Activated CD4-positive, alpha-beta T cell treated with anti-CD3 and anti-CD28 coated beads for 36 hours (primary cell): ENCODE measurements at regions of chr6 and their contacts with region 1.

Region 1: DNA sequence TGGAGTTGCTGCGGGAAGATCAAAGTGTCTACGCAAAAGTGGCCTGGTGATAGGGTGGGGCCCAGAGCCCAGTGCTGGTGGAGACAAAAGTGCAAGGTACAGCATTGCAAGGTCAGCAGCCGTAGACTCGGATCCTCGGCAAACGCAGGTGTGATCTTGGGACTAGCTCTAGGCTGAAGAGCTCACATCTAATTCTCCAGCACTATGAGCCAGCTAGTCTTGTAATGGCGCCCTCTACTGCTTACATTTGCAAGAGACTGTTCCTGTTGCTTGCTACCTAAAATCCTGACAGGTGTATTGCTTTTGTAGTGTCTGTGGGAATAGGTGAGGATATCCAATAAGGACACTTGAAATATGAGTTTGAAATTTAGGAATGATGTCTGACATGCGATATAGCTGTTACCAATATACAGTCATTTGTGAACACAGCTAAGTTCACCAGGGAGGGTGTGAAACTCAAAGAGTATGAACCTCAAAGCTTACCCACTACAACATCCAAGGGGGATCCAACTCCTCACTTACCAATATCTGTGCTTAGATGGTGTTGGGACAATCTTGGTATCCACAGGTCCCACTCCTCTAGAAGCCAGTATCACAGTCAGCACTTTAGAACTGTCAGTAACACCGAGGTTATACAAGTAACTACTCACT is 58.4 kb downstream of the PDE7B start:
- DNase-seq: peak; percentile 71
- ATAC-seq: peak; percentile 81
- H3K4me3 Mint-ChIP-seq: no peak overlapping the region
- H3K27ac Mint-ChIP-seq: no peak overlapping the region
- H3K4me1 Mint-ChIP-seq: peaks cover 11% of the 10 kb centered on the region
- H3K27me3 Mint-ChIP-seq: no peaks in the 10 kb centered on the region

Region 2: DNA sequence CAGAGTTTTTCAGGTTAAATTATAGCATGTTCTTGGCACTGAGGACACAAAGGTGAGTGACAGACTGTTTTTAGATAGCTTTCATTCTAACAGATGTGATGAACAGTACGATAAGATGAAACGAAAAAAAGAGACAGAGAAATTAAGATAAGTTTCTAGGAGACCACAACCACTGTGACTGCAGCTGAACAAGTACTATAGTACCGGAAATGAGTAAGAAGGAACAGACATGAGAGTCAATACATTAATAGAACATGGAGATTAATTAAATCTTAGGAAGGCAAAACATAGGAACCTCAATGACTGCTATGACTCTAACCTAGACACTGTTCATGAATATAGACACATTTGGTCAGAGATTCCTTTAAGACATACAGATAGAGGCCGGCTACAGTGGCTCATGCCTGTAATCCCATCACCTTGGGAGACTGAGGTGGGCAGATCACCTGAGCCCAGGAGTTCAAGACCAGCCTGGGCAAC is 895.5 kb before region 1 on chr6:
- CTCF ChIA-PET with region 1: no interaction called
- POLR2A ChIA-PET with region 1: no interaction called
- intact Hi-C with region 1: no loop called
- DNase-seq: peak; percentile 23
- ATAC-seq: peak; percentile 87
- H3K4me3 Mint-ChIP-seq: peak overlapping the region; percentile 18
- H3K27ac Mint-ChIP-seq: peak overlapping the region; percentile 45
- H3K4me1 Mint-ChIP-seq: peaks cover 59% of the 10 kb centered on the region
- H3K27me3 Mint-ChIP-seq: no peaks in the 10 kb centered on the region

Region 3: DNA sequence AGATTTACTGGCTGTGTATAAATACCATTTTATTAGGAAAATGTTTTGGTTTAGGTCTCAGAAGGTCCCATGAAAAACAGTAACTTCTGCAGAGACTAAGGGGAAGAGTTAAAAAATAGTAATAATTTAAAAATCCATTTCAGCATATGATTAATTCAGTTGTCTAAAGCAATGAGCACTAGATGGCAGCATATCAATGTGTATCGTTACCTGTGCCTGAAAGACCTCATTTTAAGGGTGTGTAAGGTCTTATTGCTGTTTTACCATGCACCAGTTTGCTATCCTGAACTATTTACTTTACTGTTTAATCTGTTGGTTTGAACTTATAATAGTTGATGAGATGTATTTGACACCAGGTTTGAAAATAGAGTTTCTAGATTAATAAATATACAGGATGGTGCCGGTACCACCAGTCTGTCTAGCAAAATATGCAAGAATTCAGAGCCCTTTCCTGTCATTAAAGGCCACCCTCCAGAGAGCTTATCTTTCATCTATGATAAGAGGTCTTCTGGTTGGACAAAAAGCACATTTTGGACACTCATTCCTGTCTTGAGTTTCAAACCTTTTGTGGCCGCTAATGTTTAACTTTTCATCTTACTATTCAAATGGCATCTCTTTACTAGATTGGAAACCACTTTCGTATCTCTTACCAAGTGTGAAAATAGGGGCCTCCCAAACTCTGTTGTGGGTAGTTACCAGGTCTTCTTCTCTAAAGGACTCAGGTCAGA is 403.4 kb before region 1 on chr6:
- CTCF ChIA-PET with region 1: interaction called, 4 read pairs
- POLR2A ChIA-PET with region 1: no interaction called
- intact Hi-C with region 1: loop called (anchors 1 kb)
- DNase-seq: no peak
- ATAC-seq: peak; percentile 81
- H3K4me3 Mint-ChIP-seq: no peak overlapping the region
- H3K27ac Mint-ChIP-seq: no peak overlapping the region
- H3K4me1 Mint-ChIP-seq: peaks cover 5% of the 10 kb centered on the region
- H3K27me3 Mint-ChIP-seq: no peaks in the 10 kb centered on the region

Region 4: DNA sequence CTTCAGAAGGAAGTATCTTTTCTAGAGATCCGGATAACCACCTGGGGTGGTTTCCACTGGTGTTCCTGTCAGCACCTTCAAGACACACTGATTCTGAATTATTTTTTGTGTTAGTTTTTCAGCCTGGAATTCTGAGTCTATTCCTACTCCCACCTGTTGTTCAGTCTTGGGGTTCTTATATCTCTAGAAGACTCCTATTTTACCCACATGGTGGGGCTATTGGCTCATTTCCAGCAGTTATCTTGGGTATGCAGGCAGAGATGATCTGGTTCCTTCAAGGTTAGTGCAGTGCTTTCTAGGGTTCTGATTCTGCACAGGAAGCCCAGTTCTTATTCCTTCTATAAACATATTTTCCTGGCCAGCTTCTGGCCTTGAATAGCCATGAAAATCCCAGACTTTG is 234.0 kb before region 1 on chr6:
- CTCF ChIA-PET with region 1: interaction called, 12 read pairs
- POLR2A ChIA-PET with region 1: no interaction called
- intact Hi-C with region 1: loop called (anchors 1 kb)
- DNase-seq: peak; percentile 51
- ATAC-seq: peak; percentile 82
- H3K4me3 Mint-ChIP-seq: no peak overlapping the region
- H3K27ac Mint-ChIP-seq: no peak overlapping the region
- H3K4me1 Mint-ChIP-seq: peaks cover 19% of the 10 kb centered on the region
- H3K27me3 Mint-ChIP-seq: no peaks in the 10 kb centered on the region

Region 5: GRCh38 chr6:135851442-135852271 is 58.2 kb before region 1 on chr6 and contains the start of gene PDE7B:
- CTCF ChIA-PET with region 1: interaction called, 6 read pairs
- POLR2A ChIA-PET with region 1: no interaction called
- intact Hi-C with region 1: loop called in 1 of 2 experiments (anchors 5 kb)
- DNase-seq: peak; percentile 73
- ATAC-seq: peak; percentile 91
- H3K4me3 Mint-ChIP-seq: peak within 1 kb of the TSS; percentile 66
- H3K27ac Mint-ChIP-seq: peak within 1 kb of the TSS; percentile 56
- H3K4me1 Mint-ChIP-seq: peaks cover 31% of the 10 kb centered on the region
- H3K27me3 Mint-ChIP-seq: no peaks in the 10 kb centered on the region
- total RNA-seq, gene PDE7B: 0.73 to 1.1 TPM

Region 6: DNA sequence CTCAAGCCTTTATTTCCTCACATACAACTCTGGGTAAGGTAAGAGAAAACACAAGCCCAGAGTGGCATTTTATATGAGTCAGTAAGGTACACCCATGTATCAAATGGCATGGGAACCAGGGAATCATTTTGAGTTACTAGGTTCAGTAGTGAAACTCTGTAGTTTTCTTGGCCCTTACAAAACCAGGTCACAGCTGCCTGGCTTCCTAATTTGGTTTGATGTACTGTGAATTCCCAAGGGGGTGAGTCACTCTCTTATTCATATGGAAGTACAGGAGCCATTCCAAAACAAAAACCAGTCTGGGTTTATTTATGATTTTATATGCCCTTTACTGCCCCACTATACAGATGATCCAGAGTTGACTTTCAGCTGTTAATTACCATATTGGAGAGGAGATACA is 12.3 kb after region 1 on chr6:
- CTCF ChIA-PET with region 1: interaction called, 23 read pairs
- POLR2A ChIA-PET with region 1: no interaction called
- intact Hi-C with region 1: no loop called
- DNase-seq: no peak
- ATAC-seq: peak; percentile 78
- H3K4me3 Mint-ChIP-seq: no peak overlapping the region
- H3K27ac Mint-ChIP-seq: no peak overlapping the region
- H3K4me1 Mint-ChIP-seq: peaks cover 15% of the 10 kb centered on the region
- H3K27me3 Mint-ChIP-seq: no peaks in the 10 kb centered on the region

Region 7: DNA sequence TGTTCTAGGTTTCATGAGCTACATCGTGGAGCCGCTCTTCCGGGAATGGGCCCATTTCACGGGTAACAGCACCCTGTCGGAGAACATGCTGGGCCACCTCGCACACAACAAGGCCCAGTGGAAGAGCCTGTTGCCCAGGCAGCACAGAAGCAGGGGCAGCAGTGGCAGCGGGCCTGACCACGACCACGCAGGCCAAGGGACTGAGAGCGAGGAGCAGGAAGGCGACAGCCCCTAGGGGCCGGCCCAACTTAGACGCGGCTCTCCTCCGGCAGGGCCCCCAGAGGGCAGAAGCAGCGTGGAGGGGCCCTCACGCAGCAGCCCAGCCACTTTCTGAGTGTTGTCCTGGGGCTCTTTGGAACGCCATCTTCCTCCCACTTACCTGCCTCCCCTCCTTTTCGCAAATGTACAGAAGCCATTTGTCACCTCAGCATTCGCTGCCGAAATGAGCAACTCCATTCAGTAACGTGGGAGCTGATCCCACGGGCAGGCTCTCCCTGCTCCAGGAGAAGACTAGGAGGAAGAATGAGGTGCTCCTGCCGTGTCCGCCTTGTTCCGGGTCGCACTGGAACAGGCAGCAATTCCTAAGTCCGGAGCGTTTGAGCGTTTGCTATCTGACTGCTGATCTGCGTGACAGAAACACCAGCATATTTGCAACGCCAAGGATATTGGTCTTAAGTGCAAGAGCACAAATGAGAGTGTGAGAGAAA is 281.9 kb after region 1 on chr6:
- CTCF ChIA-PET with region 1: no interaction called
- POLR2A ChIA-PET with region 1: no interaction called
- intact Hi-C with region 1: no loop called
- DNase-seq: no peak
- ATAC-seq: no peak
- H3K4me3 Mint-ChIP-seq: no peak overlapping the region
- H3K27ac Mint-ChIP-seq: no peak overlapping the region
- H3K4me1 Mint-ChIP-seq: no peaks in the 10 kb centered on the region
- H3K27me3 Mint-ChIP-seq: peaks cover 2% of the 10 kb centered on the region

Region 8: GRCh38 chr6:136226027-136226673 is 316.3 kb after region 1 on chr6:
- CTCF ChIA-PET with region 1: interaction called, 9 read pairs
- POLR2A ChIA-PET with region 1: no interaction called
- intact Hi-C with region 1: loop called (anchors 5 kb)
- DNase-seq: peak; percentile 72
- ATAC-seq: peak; percentile 80
- H3K4me3 Mint-ChIP-seq: no peak overlapping the region
- H3K27ac Mint-ChIP-seq: no peak overlapping the region
- H3K4me1 Mint-ChIP-seq: peaks cover 11% of the 10 kb centered on the region
- H3K27me3 Mint-ChIP-seq: no peaks in the 10 kb centered on the region